ENCODE measurements at regions of chr3 and their contacts with region 1.

Region 1: DNA sequence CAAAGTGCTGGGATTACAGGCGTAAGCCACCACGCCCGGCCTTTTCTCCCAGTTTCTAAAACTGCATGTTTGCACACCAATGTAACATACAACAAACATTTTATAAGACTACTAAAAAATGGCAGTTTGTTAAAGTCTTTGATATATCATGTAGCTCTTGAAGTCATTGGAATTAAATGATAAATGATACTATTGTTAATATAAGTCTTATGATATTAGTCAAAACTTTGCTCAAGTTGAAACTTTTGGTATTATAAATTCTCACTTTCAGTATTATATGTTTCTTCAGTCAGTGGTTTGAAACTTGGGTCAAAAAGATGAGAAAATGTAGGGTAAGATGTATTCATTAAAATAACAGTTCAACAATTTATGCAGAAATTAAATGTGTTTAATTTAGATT is 117.6 kb upstream of the TBL1XR1 start:
- DNase-seq: no peak
- H3K4me3 Mint-ChIP-seq: no peak overlapping the region
- H3K27ac Mint-ChIP-seq: no peak overlapping the region
- H3K4me1 Mint-ChIP-seq: peaks cover 15% of the 10 kb centered on the region
- H3K27me3 Mint-ChIP-seq: peaks cover 3% of the 10 kb centered on the region

Region 2: DNA sequence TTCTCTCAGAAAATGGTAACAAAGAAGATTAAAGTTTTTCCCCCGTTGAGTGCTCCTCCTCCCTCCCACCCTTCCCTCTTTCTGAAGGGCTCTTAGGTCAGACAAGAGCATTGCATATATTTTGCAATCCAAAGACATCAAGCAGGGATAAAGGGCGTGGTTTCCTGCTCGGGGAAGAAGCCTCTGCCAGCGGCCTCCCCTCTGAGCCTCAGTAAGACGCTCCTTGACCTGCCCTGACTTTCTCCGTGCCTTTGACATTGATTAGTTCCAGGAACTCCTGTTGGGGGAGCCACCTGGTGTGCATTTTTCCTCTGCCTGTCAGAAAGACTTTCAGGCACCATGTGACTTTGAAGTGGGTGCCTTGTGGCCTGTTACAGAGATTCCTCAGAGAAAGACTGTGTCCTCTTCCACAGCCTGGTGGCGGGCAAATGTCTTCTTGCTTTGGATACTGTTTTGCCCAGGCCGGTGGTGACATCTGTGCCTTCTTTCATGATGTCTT is 30.5 kb before region 1 on chr3:
- intact Hi-C with region 1: loop called (anchors 5 kb)
- DNase-seq: peak; percentile 1
- H3K4me3 Mint-ChIP-seq: peak overlapping the region; percentile 49
- H3K27ac Mint-ChIP-seq: no peak overlapping the region
- H3K4me1 Mint-ChIP-seq: peaks cover 34% of the 10 kb centered on the region
- H3K27me3 Mint-ChIP-seq: no peaks in the 10 kb centered on the region